Naive thymus-derived CD4-positive, alpha-beta T cell (primary cell): ENCODE measurements at regions of chr5 and their contacts with region 1.

Region 1: DNA sequence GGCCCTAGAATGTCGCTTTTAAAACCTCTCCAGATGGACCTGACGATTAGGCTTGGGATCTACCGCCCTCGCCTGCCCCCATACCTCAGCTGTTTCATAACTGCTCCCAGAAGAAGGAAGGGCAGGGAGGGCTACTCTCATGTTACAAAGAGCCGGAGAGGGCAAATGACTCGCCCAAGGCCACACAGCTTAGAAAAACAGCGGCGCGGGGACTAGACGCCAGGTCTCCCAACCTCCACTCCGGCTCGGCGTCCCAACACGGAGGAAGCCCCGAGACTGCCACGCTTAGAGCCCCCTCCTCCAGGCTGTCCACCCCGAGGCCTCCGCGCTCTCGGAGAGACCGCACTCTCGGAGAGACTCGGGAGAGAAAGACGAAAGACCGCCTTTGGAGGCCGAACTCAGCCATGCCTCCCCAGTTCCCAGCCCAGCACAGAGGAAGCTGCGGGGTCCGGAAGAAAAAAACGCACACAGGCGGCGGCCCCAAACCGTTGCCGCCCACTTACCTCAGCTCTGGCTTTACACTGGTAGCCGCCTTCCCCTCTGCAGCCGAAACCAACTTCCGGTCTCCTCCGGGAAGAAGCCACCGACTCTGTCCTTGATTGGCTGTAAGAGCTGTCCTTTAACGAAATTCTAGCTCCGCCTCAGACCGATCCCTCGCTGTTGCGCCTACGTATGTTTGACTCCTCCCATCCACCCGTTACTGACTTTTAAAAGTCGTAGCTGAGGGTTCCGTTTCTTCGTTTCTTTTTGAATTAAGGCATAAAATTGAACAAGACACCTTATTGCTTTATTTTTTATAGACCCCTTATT is at the start of gene MED7:
- DNase-seq: peak; percentile 66 to 98 (median 96)
- ATAC-seq: peak; percentile 98
- H3K4me3 ChIP-seq: peak within 1 kb of the TSS; percentile 82
- H3K4me3 Mint-ChIP-seq: peak within 1 kb of the TSS; percentile 92 to 99 (median 96)
- H3K27ac ChIP-seq: peak within 1 kb of the TSS; percentile 94
- H3K27ac Mint-ChIP-seq: peak within 1 kb of the TSS; percentile 97 to 100 (median 99)
- H3K4me1 ChIP-seq: peaks cover 11 to 22% of the 10 kb centered on the region in 2 donors
- H3K4me1 Mint-ChIP-seq: peaks cover 11 to 64% (median 48%) of the 10 kb centered on the region in 7 donors
- H3K27me3 ChIP-seq: no peaks in the 10 kb centered on the region
- H3K27me3 Mint-ChIP-seq: no peaks in the 10 kb centered on the region
- total RNA-seq, gene MED7: 5.8 to 18.5 (median 14.2) TPM

Region 2: DNA sequence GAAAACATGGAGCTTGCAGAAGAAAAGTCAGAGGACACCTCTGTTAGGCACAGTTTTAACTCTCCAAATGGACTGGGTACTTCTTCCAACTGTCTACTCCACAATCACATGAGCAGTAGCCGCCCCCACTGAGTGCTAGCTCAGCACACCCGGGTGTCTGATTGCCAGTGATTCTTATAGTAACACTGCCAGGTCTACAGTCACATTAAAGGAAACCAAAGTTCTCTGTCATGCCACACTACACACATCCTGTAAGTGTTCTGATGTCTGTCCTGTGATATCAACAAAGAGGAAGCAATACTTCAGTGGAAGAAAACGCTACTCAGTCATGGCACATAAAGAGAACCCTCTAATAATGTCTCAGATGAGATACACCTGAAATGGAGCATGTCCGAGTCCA is 33.5 kb before region 1 on chr5 and contains the start of gene HAVCR2:
- CTCF ChIA-PET with region 1: interaction called, 5 read pairs
- POLR2A ChIA-PET with region 1: interaction called, 15 read pairs
- intact Hi-C with region 1: loop called (anchors 1 kb)
- DNase-seq: peak; percentile 20 to 73 (median 57)
- ATAC-seq: peak; percentile 90
- H3K4me3 ChIP-seq: peak within 1 kb of the TSS; percentile 27
- H3K4me3 Mint-ChIP-seq: peak within 1 kb of the TSS; percentile 81 to 97 (median 85)
- H3K27ac ChIP-seq: peak within 1 kb of the TSS; percentile 55
- H3K27ac Mint-ChIP-seq: peak within 1 kb of the TSS; percentile 82 to 96 (median 92)
- H3K4me1 ChIP-seq: peaks cover 19 to 22% of the 10 kb centered on the region in 2 donors
- H3K4me1 Mint-ChIP-seq: peaks cover 16 to 68% (median 47%) of the 10 kb centered on the region in 7 donors
- H3K27me3 ChIP-seq: no peaks in the 10 kb centered on the region
- H3K27me3 Mint-ChIP-seq: no peaks in the 10 kb centered on the region
- total RNA-seq, gene HAVCR2: 5.1 to 110 (median 5.5) TPM

Region 3: GRCh38 chr5:157180374-157181264 is 38.1 kb after region 1 on chr5 and contains the start of gene ITK:
- CTCF ChIA-PET with region 1: interaction called, 6 read pairs
- POLR2A ChIA-PET with region 1: interaction called, 62 read pairs
- intact Hi-C with region 1: no loop called
- DNase-seq: peak in 7 of 9 donors; percentile 66 to 84 (median 77)
- ATAC-seq: peak; percentile 88
- H3K4me3 ChIP-seq: peak within 1 kb of the TSS; percentile 62
- H3K4me3 Mint-ChIP-seq: peak within 1 kb of the TSS; percentile 89 to 100 (median 97)
- H3K27ac ChIP-seq: peak within 1 kb of the TSS; percentile 81
- H3K27ac Mint-ChIP-seq: peak within 1 kb of the TSS; percentile 91 to 99 (median 96)
- H3K4me1 ChIP-seq: peaks cover 33 to 42% of the 10 kb centered on the region in 2 donors
- H3K4me1 Mint-ChIP-seq: peaks cover 27 to 61% (median 50%) of the 10 kb centered on the region in 7 donors
- H3K27me3 ChIP-seq: no peaks in the 10 kb centered on the region
- H3K27me3 Mint-ChIP-seq: no peaks in the 10 kb centered on the region
- total RNA-seq, gene ITK: 278 to 481 (median 324) TPM

Region 4: DNA sequence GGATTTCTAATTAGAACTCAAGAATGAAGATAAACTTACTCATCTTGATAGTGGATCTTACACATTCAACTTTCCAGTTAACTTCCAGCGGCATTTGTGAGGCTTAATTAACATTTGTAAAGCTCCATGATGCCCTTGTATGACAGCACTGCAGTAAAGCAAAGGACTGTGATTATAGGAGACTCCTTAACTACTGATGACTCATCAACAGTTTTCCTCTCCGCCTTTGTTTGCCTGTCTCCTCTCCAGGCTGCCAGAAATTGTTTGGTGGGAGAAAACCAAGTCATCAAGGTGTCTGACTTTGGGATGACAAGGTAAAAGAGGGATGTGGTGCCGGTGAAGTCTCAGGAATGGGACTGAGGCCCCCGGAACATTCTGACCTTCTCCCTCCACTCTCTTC is 103.0 kb after region 1 on chr5:
- CTCF ChIA-PET with region 1: no interaction called
- POLR2A ChIA-PET with region 1: interaction called, 24 read pairs
- intact Hi-C with region 1: no loop called
- DNase-seq: no peak
- ATAC-seq: no peak
- H3K4me3 ChIP-seq: no peak overlapping the region
- H3K4me3 Mint-ChIP-seq: peak overlapping the region in 3 of 10 donors; percentile 23 to 75 (median 27)
- H3K27ac ChIP-seq: peak overlapping the region; percentile 36
- H3K27ac Mint-ChIP-seq: peak overlapping the region; percentile 63 to 98 (median 86)
- H3K4me1 ChIP-seq: peaks cover 45 to 67% of the 10 kb centered on the region in 2 donors
- H3K4me1 Mint-ChIP-seq: peaks cover 41 to 87% (median 81%) of the 10 kb centered on the region in 7 donors
- H3K27me3 ChIP-seq: no peaks in the 10 kb centered on the region
- H3K27me3 Mint-ChIP-seq: no peaks in the 10 kb centered on the region

Region 5: GRCh38 chr5:157303667-157304327 is 161.3 kb after region 1 on chr5:
- CTCF ChIA-PET with region 1: interaction called, 3 read pairs
- POLR2A ChIA-PET with region 1: interaction called, 19 read pairs
- intact Hi-C with region 1: loop called in 1 of 2 experiments (anchors 1 kb)
- DNase-seq: peak; percentile 38 to 79 (median 67)
- ATAC-seq: peak; percentile 80
- H3K4me3 ChIP-seq: peak overlapping the region; percentile 50
- H3K4me3 Mint-ChIP-seq: peak overlapping the region; percentile 71 to 89 (median 82)
- H3K27ac ChIP-seq: peak overlapping the region; percentile 62
- H3K27ac Mint-ChIP-seq: peak overlapping the region; percentile 83 to 97 (median 94)
- H3K4me1 ChIP-seq: peaks cover 51 to 56% of the 10 kb centered on the region in 2 donors
- H3K4me1 Mint-ChIP-seq: peaks cover 48 to 74% (median 65%) of the 10 kb centered on the region in 7 donors
- H3K27me3 ChIP-seq: no peaks in the 10 kb centered on the region
- H3K27me3 Mint-ChIP-seq: no peaks in the 10 kb centered on the region

Region 6: DNA sequence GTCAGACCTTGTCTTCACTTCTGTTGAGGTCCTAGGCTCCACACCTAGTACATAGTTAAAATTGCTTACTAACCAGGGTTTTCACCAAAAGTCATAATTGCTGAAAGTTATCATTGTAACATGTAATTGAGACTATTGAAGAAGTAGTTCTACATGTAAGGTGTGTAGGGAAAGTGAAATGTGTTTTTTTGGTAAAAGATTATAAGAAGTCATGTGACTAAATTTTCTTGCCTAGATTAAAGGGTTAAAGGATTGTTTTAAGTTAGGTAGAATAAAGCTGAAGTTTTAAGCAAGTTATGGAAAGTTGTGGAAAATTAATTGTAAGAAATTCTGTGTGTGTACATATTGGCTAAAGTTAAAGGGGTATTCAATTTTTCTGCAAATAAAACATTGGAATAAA is 554.9 kb after region 1 on chr5:
- CTCF ChIA-PET with region 1: no interaction called
- POLR2A ChIA-PET with region 1: no interaction called
- intact Hi-C with region 1: no loop called
- DNase-seq: no peak
- ATAC-seq: no peak
- H3K4me3 ChIP-seq: no peak overlapping the region
- H3K4me3 Mint-ChIP-seq: no peak overlapping the region
- H3K27ac ChIP-seq: no peak overlapping the region
- H3K27ac Mint-ChIP-seq: no peak overlapping the region
- H3K4me1 ChIP-seq: no peaks in the 10 kb centered on the region
- H3K4me1 Mint-ChIP-seq: peaks cover 0 to 2% (median 0%) of the 10 kb centered on the region in 7 donors
- H3K27me3 ChIP-seq: no peaks in the 10 kb centered on the region
- H3K27me3 Mint-ChIP-seq: peaks cover 0 to 20% (median 10%) of the 10 kb centered on the region in 5 donors

Region 7: GRCh38 chr5:157731272-157732129 is 589.0 kb after region 1 on chr5 and contains the start of gene THG1L:
- CTCF ChIA-PET with region 1: no interaction called
- POLR2A ChIA-PET with region 1: interaction called, 5 read pairs
- intact Hi-C with region 1: loop called (anchors 2 kb)
- DNase-seq: peak; percentile 94 to 98 (median 96)
- ATAC-seq: peak; percentile 98
- H3K4me3 ChIP-seq: peak within 1 kb of the TSS; percentile 73
- H3K4me3 Mint-ChIP-seq: peak within 1 kb of the TSS; percentile 87 to 99 (median 97)
- H3K27ac ChIP-seq: peak within 1 kb of the TSS; percentile 73
- H3K27ac Mint-ChIP-seq: peak within 1 kb of the TSS; percentile 80 to 98 (median 93)
- H3K4me1 ChIP-seq: peaks cover 3 to 7% of the 10 kb centered on the region in 2 donors
- H3K4me1 Mint-ChIP-seq: peaks cover 9 to 26% (median 23%) of the 10 kb centered on the region in 7 donors
- H3K27me3 ChIP-seq: no peaks in the 10 kb centered on the region
- H3K27me3 Mint-ChIP-seq: no peaks in the 10 kb centered on the region
- total RNA-seq, gene THG1L: 6.2 to 17.4 (median 7.4) TPM